Testis (tissue), 5 donors: ENCODE measurements at regions of chrX and their contacts with region 1.

Region 1: DNA sequence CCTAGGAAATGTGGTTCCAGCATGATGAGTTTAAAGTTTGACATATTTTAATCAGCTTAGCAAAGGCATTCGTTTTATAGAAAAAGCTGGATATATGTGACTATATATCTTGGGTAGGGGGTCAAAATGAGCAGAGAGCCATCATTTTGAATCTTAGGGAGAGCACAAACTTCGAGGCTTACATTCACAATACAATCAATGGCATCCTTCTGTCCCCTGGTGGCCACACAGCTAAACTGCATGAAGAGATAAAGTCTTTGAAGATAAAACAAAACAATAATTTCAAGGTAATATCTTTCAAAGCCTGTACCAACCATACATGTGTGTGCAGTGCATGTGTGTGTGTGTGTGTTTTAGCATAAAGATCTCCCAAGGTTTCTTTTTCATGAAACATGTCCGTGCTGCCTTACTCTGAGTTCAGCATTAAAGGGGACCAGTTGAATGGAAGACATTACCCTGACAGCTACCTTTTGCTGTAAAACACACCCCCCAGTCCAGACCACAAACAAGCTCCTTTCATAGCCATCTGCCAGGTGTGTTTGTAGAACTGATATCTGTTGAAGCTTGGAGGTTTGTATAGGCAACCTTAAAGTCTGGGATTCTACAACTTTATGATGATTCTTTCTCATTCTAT is 22.0 kb downstream of the DYNLT3 start:
- DNase-seq: peak; percentile 33
- H3K4me3 ChIP-seq: no peak overlapping the region
- H3K27ac ChIP-seq: no peak overlapping the region
- H3K4me1 ChIP-seq: no peaks in the 10 kb centered on the region
- H3K27me3 ChIP-seq: no peaks in the 10 kb centered on the region
- CTCF ChIP-seq: peak; percentile 62 to 79 (median 70)
- POLR2A ChIP-seq: no peak

Region 2: DNA sequence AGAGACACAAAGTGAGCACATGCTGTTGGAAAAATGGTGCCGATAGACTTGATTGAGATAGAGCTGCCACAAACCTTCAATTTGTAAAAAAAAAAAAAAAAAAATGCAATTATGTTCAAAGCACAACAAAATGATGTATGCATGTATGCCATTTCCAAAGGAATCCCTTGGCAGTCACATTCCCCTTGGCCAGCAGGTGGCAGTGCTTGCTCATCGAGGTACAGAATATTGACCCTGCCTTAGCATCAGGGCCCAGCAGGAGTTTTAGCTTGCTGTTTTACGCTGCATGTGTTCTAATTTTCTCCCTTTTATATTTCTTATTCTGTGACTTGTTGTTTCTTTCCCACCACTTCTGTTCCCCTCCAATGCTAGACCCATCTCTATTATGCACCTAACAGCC is 80.0 kb before region 1 on chrX:
- intact Hi-C with region 1: loop called (anchors 10 kb)
- DNase-seq: peak; percentile 75
- H3K4me3 ChIP-seq: no peak overlapping the region
- H3K27ac ChIP-seq: no peak overlapping the region
- H3K4me1 ChIP-seq: no peaks in the 10 kb centered on the region
- H3K27me3 ChIP-seq: no peaks in the 10 kb centered on the region
- CTCF ChIP-seq: peak in 2 of 3 experiments; percentile 54 to 76
- POLR2A ChIP-seq: no peak